Ascending aorta (tissue), 2 donors: ENCODE measurements at regions of chr16 and their contacts with region 1.

Region 1: GRCh38 chr16:740764-741505 is at the start of gene CIAO3:
- DNase-seq: peak; percentile 53 to 91
- H3K4me3 ChIP-seq: peak within 1 kb of the TSS; percentile 79 to 90
- H3K27ac ChIP-seq: peak within 1 kb of the TSS; percentile 39 to 46
- H3K4me1 ChIP-seq: peaks cover 4 to 17% of the 10 kb centered on the region in 2 donors
- H3K27me3 ChIP-seq: no peaks in the 10 kb centered on the region
- CTCF ChIP-seq: peak; percentile 91 to 98 (median 93)
- total RNA-seq, gene CIAO3: 103 TPM

Region 2: DNA sequence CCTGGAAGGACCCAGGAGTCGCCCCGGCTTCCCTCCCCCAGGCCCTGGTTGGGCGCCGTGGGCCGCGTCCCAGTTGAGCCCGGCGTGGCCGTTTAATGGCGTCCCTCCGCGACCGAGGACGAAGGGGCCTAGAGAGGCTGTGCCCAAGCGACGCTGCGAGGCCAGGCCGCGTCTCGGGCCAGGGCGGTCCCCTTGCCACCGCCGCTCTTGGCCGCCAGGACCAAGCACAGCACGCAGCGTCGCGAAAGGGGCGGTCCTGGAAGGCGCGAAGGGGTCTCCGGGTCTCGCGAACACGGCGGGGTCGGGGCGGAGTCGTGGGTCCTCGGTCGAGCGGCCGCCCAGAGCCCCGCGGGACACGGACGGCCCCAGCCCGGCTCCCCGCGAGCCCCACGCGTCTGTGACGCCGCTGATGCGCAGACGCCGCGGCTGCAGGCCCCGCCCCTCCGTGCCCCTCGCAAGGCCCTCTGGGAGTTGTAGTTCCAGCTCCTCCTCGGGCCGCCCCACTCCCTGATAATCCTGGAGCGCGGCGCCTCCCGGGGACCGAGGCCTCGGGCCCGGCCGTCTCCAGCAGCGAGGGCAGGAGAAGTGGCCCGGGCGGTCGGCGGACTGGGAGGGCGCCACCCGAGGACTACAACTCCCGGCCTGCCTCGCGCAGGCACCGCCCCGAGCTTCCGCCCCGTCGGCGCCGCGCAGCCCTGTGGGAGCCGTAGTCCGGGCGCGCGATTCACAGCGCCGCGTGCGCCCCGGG is 213.8 kb before region 1 on chr16 and contains the start of gene CAPN15:
- intact Hi-C with region 1: no loop called
- DNase-seq: peak; percentile 43 to 92
- H3K4me3 ChIP-seq: peak within 1 kb of the TSS; percentile 66 to 88
- H3K27ac ChIP-seq: peak within 1 kb of the TSS; percentile 95 to 99
- H3K4me1 ChIP-seq: peaks cover 14 to 34% of the 10 kb centered on the region in 2 donors
- H3K27me3 ChIP-seq: no peaks in the 10 kb centered on the region
- CTCF ChIP-seq: peak; percentile 18 to 55 (median 29)
- total RNA-seq, gene CAPN15: 249 TPM

Region 3: GRCh38 chr16:714558-715476 is 26.1 kb before region 1 on chr16 and contains the start of gene METRN:
- intact Hi-C with region 1: loop called (anchors 2 kb)
- DNase-seq: peak; percentile 39 to 95
- H3K4me3 ChIP-seq: peak within 1 kb of the TSS; percentile 76 to 93
- H3K27ac ChIP-seq: no peak within 1 kb of the TSS
- H3K4me1 ChIP-seq: peaks cover 11 to 20% of the 10 kb centered on the region in 2 donors
- H3K27me3 ChIP-seq: peaks cover 6% of the 10 kb centered on the region
- CTCF ChIP-seq: no peak
- total RNA-seq, gene METRN: 118 TPM